GM18951 (cell line): ENCODE measurements at regions of chrX and their contacts with region 1.

Region 1: GRCh38 chrX:118807151-118808017 is 16.2 kb upstream of the ZCCHC12 start:
- POLR2A ChIP-seq: no peak

Region 2: DNA sequence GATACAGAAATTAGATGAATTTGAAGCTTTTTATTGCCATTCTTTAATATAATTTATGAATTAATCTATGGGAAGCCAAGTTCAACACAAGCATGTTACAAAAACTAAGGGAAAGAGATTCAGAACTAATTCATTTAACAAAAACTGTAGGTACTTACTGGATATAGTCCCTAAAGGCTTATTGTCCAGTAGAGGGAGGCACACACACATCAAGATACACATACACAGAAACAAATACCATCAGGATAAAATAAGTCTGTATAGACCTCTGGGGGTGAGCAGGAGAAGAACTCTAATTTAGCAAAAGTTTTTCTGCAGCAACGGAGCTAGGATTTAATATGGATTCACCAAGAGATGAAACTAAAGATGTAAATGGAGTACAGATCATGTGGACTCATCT is 163.0 kb before region 1 on chrX:
- in situ Hi-C with region 1: loop called (anchors 25 kb)
- POLR2A ChIP-seq: no peak

Region 3: GRCh38 chrX:118682258-118683014 is 124.9 kb before region 1 on chrX:
- in situ Hi-C with region 1: no loop called
- POLR2A ChIP-seq: no peak